Adrenal gland (tissue), 19 donors: ENCODE measurements at regions of chr4 and their contacts with region 1.

Region 1: GRCh38 chr4:24488399-24489164 is 95.8 kb downstream of the DHX15 start:
- DNase-seq: peak; percentile 64 to 91 (median 80)
- H3K4me3 ChIP-seq: no peak overlapping the region
- H3K27ac ChIP-seq: no peak overlapping the region
- H3K4me1 ChIP-seq: no peaks in the 10 kb centered on the region
- H3K27me3 ChIP-seq: no peaks in the 10 kb centered on the region
- CTCF ChIP-seq: peak; percentile 79 to 88 (median 83)
- POLR2A ChIP-seq: no peak

Region 2: GRCh38 chr4:24584175-24584850 is 95.7 kb after region 1 on chr4 and contains the start of gene DHX15:
- intact Hi-C with region 1: loop called in 1 of 2 experiments (anchors 10 kb)
- DNase-seq: peak; percentile 95 to 98 (median 97)
- H3K4me3 ChIP-seq: peak within 1 kb of the TSS; percentile 79 to 100 (median 82)
- H3K27ac ChIP-seq: peak within 1 kb of the TSS; percentile 94 to 99 (median 99)
- H3K4me1 ChIP-seq: peaks cover 9 to 28% of the 10 kb centered on the region in 2 donors
- H3K27me3 ChIP-seq: no peaks in the 10 kb centered on the region
- CTCF ChIP-seq: peak in 2 of 6 experiments; percentile 17 to 25
- POLR2A ChIP-seq: peak; percentile 15 to 76
- total RNA-seq, gene DHX15: 49.1 to 158 (median 81.0) TPM

Region 3: GRCh38 chr4:24686871-24687680 is 198.5 kb after region 1 on chr4:
- intact Hi-C with region 1: loop called (anchors 5 kb)
- DNase-seq: peak in 5 of 7 donors; percentile 14 to 61 (median 38)
- H3K4me3 ChIP-seq: no peak overlapping the region
- H3K27ac ChIP-seq: no peak overlapping the region
- H3K4me1 ChIP-seq: no peaks in the 10 kb centered on the region
- H3K27me3 ChIP-seq: peaks cover 7% of the 10 kb centered on the region
- CTCF ChIP-seq: peak; percentile 19 to 60 (median 56)
- POLR2A ChIP-seq: no peak

Region 4: GRCh38 chr4:24912252-24913118 is 423.9 kb after region 1 on chr4 and contains the start of gene CCDC149:
- intact Hi-C with region 1: loop called in 1 of 2 experiments (anchors 10 kb)
- DNase-seq: peak; percentile 57 to 83 (median 69)
- H3K4me3 ChIP-seq: peak within 1 kb of the TSS in 3 of 4 donors; percentile 16 to 82 (median 36)
- H3K27ac ChIP-seq: peak within 1 kb of the TSS in 3 of 5 donors; percentile 59 to 86 (median 77)
- H3K4me1 ChIP-seq: peaks cover 0 to 4% of the 10 kb centered on the region in 2 donors
- H3K27me3 ChIP-seq: no peaks in the 10 kb centered on the region
- CTCF ChIP-seq: peak in 3 of 6 experiments; percentile 4 to 10 (median 7)
- POLR2A ChIP-seq: peak in 1 of 2 donors; percentile 49
- total RNA-seq, gene CCDC149: 3.6 to 13.0 (median 5.9) TPM

Region 5: GRCh38 chr4:24980064-24980690 is 491.6 kb after region 1 on chr4:
- intact Hi-C with region 1: loop called (anchors 5 to 10 kb)
- DNase-seq: peak; percentile 61 to 84 (median 67)
- H3K4me3 ChIP-seq: peak overlapping the region in 1 of 4 donors; percentile 24
- H3K27ac ChIP-seq: peak overlapping the region; percentile 20 to 79 (median 38)
- H3K4me1 ChIP-seq: peaks cover 0 to 19% of the 10 kb centered on the region in 2 donors
- H3K27me3 ChIP-seq: no peaks in the 10 kb centered on the region
- CTCF ChIP-seq: peak; percentile 78 to 93 (median 84)
- POLR2A ChIP-seq: no peak

Region 6: GRCh38 chr4:24988776-24989175 is 500.2 kb after region 1 on chr4:
- intact Hi-C with region 1: loop called in 1 of 2 experiments (anchors 5 kb)
- DNase-seq: no peak
- H3K4me3 ChIP-seq: no peak overlapping the region
- H3K27ac ChIP-seq: no peak overlapping the region
- H3K4me1 ChIP-seq: no peaks in the 10 kb centered on the region
- H3K27me3 ChIP-seq: no peaks in the 10 kb centered on the region
- CTCF ChIP-seq: peak in 4 of 6 experiments; percentile 5 to 24 (median 20)
- POLR2A ChIP-seq: no peak